Aorta (tissue), 5 donors: ENCODE measurements at regions of chr14 and their contacts with region 1.

Region 1: GRCh38 chr14:22570132-22570949 is 18.7 kb downstream of the DAD1 start:
- DNase-seq: peak in 1 of 2 donors; percentile 65
- ATAC-seq: peak; percentile 91
- H3K4me3 ChIP-seq: no peak overlapping the region
- H3K27ac ChIP-seq: peak overlapping the region in 1 of 2 donors; percentile 30
- H3K4me1 ChIP-seq: no peaks in the 10 kb centered on the region
- H3K27me3 ChIP-seq: no peaks in the 10 kb centered on the region

Region 2: GRCh38 chr14:22610931-22611330 is 40.6 kb after region 1 on chr14:
- intact Hi-C with region 1: loop called in 1 of 2 experiments (anchors 1 kb)
- DNase-seq: no peak
- ATAC-seq: no peak
- H3K4me3 ChIP-seq: no peak overlapping the region
- H3K27ac ChIP-seq: no peak overlapping the region
- H3K4me1 ChIP-seq: peaks cover 0 to 5% of the 10 kb centered on the region in 2 donors
- H3K27me3 ChIP-seq: no peaks in the 10 kb centered on the region

Region 3: DNA sequence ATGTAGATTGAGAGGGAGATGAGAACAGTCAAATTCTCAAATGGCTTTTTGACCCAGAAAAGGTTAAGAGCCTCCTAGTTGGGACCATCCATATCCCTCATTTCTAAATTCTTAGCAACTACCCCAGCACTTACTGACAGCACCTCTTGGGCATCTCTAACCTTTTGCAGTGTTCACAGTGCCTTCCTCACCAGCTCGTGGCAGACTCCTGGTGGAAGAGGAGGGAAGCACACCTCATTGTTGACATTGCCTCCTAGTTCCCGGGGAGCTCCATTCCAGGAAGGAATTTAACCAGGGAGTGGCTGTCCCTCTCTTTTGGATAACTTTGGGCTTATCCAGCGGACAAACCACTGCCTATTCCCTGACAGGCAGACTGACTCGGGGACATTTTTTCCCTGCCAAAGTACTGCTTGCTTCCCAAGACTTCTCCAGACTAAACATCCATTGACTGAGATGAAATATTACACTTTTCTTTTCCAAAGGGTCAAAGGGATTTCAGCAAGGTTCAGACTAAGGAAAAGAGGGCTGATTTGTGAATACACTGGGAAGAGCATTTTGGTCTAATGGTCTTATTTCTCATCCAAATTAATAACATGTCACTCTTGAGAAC is 82.8 kb after region 1 on chr14:
- intact Hi-C with region 1: loop called (anchors 2 to 5 kb)
- DNase-seq: peak in 1 of 2 donors; percentile 57
- ATAC-seq: peak; percentile 58
- H3K4me3 ChIP-seq: no peak overlapping the region
- H3K27ac ChIP-seq: no peak overlapping the region
- H3K4me1 ChIP-seq: no peaks in the 10 kb centered on the region
- H3K27me3 ChIP-seq: no peaks in the 10 kb centered on the region

Region 4: DNA sequence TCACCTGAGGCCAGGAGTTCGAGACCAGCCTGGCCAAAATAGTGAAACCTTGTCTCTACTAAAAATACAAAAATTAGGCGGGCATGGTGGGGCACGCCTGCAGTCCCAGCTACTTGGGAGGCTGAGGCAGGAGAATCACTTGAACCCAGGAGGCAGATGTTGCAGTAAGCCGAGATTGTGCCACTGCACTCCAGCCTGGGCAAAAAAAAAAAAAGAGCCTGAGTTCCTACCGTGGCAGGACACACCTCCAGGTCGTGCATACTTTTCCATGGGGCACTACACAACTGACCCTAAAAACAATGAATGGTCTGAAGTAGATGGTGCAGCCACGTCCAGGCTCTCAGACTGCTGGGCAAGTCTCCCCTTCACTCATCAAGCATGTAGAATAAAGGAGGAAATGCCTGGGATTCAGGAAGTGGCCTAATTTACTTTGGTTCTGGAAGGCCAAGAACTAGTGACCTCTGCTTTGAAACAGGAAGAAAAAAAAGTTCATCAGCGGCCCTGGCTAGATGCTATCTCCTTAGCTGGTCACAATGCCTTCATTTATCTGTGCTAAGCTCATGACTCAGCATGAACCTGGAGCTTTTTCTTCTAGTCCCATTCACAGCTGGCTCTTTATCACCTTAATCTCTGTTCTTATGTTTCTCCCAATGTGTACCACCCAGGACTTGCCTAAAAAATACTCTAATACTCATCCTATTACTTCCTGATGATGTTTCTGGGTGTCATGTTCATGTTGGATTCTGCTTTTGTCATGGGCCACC is 129.6 kb after region 1 on chr14:
- intact Hi-C with region 1: no loop called
- DNase-seq: no peak
- ATAC-seq: no peak
- H3K4me3 ChIP-seq: no peak overlapping the region
- H3K27ac ChIP-seq: no peak overlapping the region
- H3K4me1 ChIP-seq: no peaks in the 10 kb centered on the region
- H3K27me3 ChIP-seq: no peaks in the 10 kb centered on the region